Adrenal gland (tissue), 19 donors: ENCODE measurements at regions of chr3 and their contacts with region 1.

Region 1: DNA sequence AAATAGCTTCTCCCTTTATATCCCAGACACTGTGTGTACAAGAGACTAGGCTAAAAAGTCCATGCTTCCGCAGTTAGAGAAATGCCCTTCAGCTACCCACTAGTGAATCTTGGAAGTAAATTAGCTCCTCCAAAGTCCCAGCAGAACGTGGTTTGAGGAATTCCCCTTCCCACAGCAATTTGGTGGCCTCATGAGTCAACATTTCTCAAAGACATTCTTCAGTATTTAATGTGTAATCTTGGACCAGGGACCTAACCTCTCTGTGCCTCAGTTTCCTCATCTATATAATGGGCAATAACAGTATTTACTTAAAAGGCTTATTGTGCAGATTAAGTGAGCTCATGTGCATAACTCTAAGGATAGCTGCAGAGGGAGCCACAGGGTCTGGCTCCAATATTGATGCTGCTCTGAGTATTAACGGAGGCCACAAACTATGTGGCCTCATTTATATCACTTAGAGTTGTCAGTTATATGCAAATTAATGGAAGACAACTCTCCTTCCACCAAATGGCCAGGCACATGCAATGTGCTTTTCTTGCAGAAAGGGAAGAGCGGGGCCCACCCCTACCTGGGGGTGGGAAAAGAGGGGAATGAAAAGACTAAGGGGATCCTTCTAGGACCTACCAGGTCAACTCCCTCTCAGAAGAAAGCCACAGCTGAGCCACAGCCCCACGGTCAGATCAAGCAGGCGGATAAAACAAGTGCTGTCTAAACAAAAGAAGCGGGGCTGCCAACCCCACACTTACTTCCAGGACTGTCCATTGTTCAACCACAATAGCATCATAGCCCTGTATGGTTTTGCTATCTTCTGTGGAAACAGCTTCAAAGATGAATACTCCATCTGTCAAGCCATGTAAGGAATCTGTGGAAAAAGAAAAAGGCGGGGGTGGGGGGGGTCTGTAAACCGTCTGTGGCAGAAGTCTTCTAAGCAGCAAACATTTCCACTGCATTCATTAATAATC is 92.5 kb downstream of the OXNAD1 start:
- DNase-seq: no peak
- H3K4me3 ChIP-seq: no peak overlapping the region
- H3K27ac ChIP-seq: no peak overlapping the region
- H3K4me1 ChIP-seq: no peaks in the 10 kb centered on the region
- H3K27me3 ChIP-seq: no peaks in the 10 kb centered on the region
- CTCF ChIP-seq: no peak
- POLR2A ChIP-seq: no peak

Region 2: DNA sequence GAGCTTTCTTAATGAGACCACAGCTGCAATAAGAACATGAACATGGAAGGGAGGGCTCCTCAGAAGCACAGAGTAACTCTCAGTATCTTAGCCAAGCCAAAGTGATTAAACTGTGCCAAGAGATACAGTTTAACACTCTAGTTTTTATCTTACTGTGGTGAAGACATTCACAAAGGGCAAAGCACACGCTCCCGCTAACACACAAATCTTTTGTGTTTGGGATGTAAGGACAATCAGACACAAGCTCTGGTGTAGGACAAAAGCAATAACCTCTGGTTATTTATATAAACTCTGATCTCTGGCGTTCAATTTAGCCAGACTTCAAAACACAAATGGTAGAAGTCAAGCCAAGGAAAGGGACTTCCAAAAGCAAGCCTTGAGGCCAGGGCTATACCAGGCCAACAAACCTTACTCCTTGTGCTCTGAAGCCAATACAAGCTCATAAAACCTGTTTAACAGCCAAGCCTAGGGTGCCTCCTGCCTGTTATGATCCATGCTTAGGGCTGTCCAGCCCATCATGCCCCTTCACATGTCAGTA is 120.5 kb before region 1 on chr3:
- intact Hi-C with region 1: no loop called
- DNase-seq: no peak
- H3K4me3 ChIP-seq: no peak overlapping the region
- H3K27ac ChIP-seq: no peak overlapping the region
- H3K4me1 ChIP-seq: peaks cover 0 to 19% of the 10 kb centered on the region in 2 donors
- H3K27me3 ChIP-seq: no peaks in the 10 kb centered on the region
- CTCF ChIP-seq: no peak
- POLR2A ChIP-seq: no peak

Region 3: GRCh38 chr3:16264708-16265454 is 92.6 kb before region 1 on chr3 and contains the starts of genes DPH3 and OXNAD1:
- intact Hi-C with region 1: no loop called
- DNase-seq: peak; percentile 100
- H3K4me3 ChIP-seq: peak within 1 kb of the TSS; percentile 7 to 99 (median 69)
- H3K27ac ChIP-seq: peak within 1 kb of the TSS; percentile 85 to 95 (median 90)
- H3K4me1 ChIP-seq: peaks cover 12 to 51% of the 10 kb centered on the region in 2 donors
- H3K27me3 ChIP-seq: no peaks in the 10 kb centered on the region
- CTCF ChIP-seq: peak in 4 of 6 experiments; percentile 39 to 65 (median 50)
- POLR2A ChIP-seq: peak; percentile 24 to 92
- total RNA-seq, gene DPH3: 12.9 to 39.7 (median 19.2) TPM
- total RNA-seq, gene OXNAD1: 6.5 to 22.2 (median 11.9) TPM

Region 4: DNA sequence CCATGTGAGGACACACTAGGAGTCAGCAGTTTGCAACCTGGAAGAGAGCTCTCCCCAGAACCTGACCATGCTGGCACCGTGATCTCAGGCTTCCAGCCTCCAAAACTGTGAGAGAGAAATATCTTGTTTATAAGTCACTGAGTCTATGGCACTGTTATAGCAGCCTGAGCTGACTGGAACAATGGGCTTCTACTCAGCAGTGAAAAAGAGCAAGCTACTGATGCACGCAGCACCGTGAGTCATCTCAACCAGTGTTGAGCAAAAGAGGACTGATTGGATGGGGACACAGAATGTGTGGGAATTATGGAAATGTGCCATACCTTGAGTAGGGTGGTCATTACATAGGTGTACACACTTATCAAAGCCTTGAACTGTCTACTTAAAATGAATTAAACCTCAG is 757.7 kb after region 1 on chr3:
- intact Hi-C with region 1: loop called in 1 of 2 experiments (anchors 5 kb)
- DNase-seq: no peak
- H3K4me3 ChIP-seq: no peak overlapping the region
- H3K27ac ChIP-seq: no peak overlapping the region
- H3K4me1 ChIP-seq: no peaks in the 10 kb centered on the region
- H3K27me3 ChIP-seq: no peaks in the 10 kb centered on the region
- CTCF ChIP-seq: no peak
- POLR2A ChIP-seq: no peak